Naive thymus-derived CD4-positive, alpha-beta T cell (primary cell): ENCODE measurements at regions of chr4 and their contacts with region 1.

Region 1: GRCh38 chr4:22670956-22671355 is 21.8 kb upstream of the GBA3 start:
- DNase-seq: no peak
- ATAC-seq: no peak
- H3K4me3 ChIP-seq: no peak overlapping the region
- H3K4me3 Mint-ChIP-seq: peak overlapping the region in 3 of 10 donors; percentile 7 to 62 (median 57)
- H3K27ac ChIP-seq: no peak overlapping the region
- H3K27ac Mint-ChIP-seq: peak overlapping the region in 7 of 9 donors; percentile 12 to 94 (median 71)
- H3K4me1 ChIP-seq: peaks cover 0 to 56% of the 10 kb centered on the region in 2 donors
- H3K4me1 Mint-ChIP-seq: peaks cover 41 to 92% (median 82%) of the 10 kb centered on the region in 7 donors
- H3K27me3 ChIP-seq: no peaks in the 10 kb centered on the region
- H3K27me3 Mint-ChIP-seq: no peaks in the 10 kb centered on the region

Region 2: GRCh38 chr4:22653752-22654151 is 17.2 kb before region 1 on chr4:
- CTCF ChIA-PET with region 1: no interaction called
- POLR2A ChIA-PET with region 1: interaction called, 3 read pairs
- intact Hi-C with region 1: loop called in 1 of 2 experiments (anchors 2 kb)
- DNase-seq: no peak
- ATAC-seq: no peak
- H3K4me3 ChIP-seq: no peak overlapping the region
- H3K4me3 Mint-ChIP-seq: no peak overlapping the region
- H3K27ac ChIP-seq: no peak overlapping the region
- H3K27ac Mint-ChIP-seq: no peak overlapping the region
- H3K4me1 ChIP-seq: no peaks in the 10 kb centered on the region
- H3K4me1 Mint-ChIP-seq: no peaks in the 10 kb centered on the region
- H3K27me3 ChIP-seq: no peaks in the 10 kb centered on the region
- H3K27me3 Mint-ChIP-seq: no peaks in the 10 kb centered on the region